GM12878 (cell line): ENCODE measurements at regions of chr4 and their contacts with region 1.

Region 1: GRCh38 chr4:176319704-176320339 is at the start of gene SPCS3:
- DNase-seq: peak; percentile 67
- ATAC-seq: peak; percentile 94
- H3K4me3 ChIP-seq: peak within 1 kb of the TSS; percentile 81
- H3K27ac ChIP-seq: peak within 1 kb of the TSS; percentile 83
- H3K4me1 ChIP-seq: peaks cover 9% of the 10 kb centered on the region; the same call in 1 of the 2 replicates
- H3K27me3 ChIP-seq: no peaks in the 10 kb centered on the region
- CTCF ChIP-seq: no peak
- EP300 ChIP-seq: no peak
- POLR2A ChIP-seq: peak; percentile 94
- RAD21 ChIP-seq: no peak
- polyA plus RNA-seq, gene SPCS3: 50.6 to 53.4 TPM

Region 2: DNA sequence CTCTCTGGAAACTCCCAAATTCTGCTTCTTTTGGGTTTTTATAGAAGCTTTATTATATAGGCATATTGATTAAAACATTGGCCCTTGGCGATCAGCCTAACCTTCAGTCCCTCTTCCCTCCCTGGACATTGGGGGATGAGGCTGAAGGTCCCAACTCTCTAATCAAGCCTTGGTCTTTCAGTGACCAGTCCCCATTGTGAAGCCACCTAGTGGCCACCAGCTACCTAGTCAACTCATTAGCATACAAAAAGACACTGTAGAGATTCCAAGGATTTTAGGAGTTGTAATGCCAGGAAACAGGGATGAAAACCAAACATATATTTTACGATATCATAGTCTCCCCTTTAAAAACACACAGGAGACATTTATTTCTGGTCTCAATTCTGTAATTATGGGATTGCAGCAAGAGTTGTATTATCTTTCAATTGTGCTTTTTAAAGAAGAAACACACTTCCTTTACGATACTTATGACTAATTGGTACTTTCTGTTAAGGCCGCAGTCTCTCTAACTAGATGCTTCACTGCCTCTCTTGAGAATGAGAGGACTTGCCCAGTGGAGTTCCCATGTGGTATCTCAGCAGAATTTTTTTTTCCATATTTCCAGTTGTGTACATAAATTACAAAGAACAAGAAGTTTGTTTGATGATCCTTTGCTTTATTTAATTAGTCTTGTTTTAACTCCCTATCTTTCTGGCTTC is 196.0 kb before region 1 on chr4:
- CTCF ChIA-PET with region 1: interaction called, 14 read pairs
- POLR2A ChIA-PET with region 1: no interaction called
- RAD21 ChIA-PET with region 1: no interaction called
- SMC1A ChIA-PET with region 1: no interaction called
- in situ Hi-C with region 1: no loop called
- intact Hi-C with region 1: no loop called
- DNase-seq: peak; percentile 51
- ATAC-seq: peak; percentile 99
- H3K4me3 ChIP-seq: 0 out of 2 replicates have a peak overlapping the region, but pooled peaks have one; percentile 1
- H3K27ac ChIP-seq: no peak overlapping the region
- H3K4me1 ChIP-seq: peaks cover 7% of the 10 kb centered on the region
- H3K27me3 ChIP-seq: no peaks in the 10 kb centered on the region
- CTCF ChIP-seq: peak; percentile 47 to 80 (median 67)
- EP300 ChIP-seq: peak; percentile 71 to 78; a peak in 3 of 4 replicates
- POLR2A ChIP-seq: no peak
- RAD21 ChIP-seq: peak; percentile 33

Region 3: DNA sequence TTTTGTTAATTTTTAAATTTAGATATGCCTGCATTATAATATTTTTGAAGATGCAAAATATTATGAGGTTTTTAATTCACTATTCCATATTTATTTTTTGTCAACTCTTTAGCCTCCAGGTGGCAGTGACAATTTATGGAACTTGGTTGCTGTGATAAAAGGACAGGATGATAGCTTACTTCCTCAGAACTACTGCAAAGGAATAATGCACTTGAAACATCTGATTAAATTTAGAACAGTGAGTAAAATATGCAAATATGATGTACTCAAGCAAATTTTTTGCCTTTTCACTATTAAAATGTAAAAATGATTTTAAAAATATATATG is 169.5 kb before region 1 on chr4:
- CTCF ChIA-PET with region 1: no interaction called
- POLR2A ChIA-PET with region 1: no interaction called
- RAD21 ChIA-PET with region 1: interaction called, 4 read pairs
- SMC1A ChIA-PET with region 1: no interaction called
- in situ Hi-C with region 1: no loop called
- intact Hi-C with region 1: loop called (anchors 5 kb)
- DNase-seq: no peak
- ATAC-seq: no peak
- H3K4me3 ChIP-seq: no peak overlapping the region
- H3K27ac ChIP-seq: no peak overlapping the region
- H3K4me1 ChIP-seq: no peaks in the 10 kb centered on the region
- H3K27me3 ChIP-seq: no peaks in the 10 kb centered on the region
- CTCF ChIP-seq: peak in 1 of 3 experiments; percentile 30; a peak in 1 of 6 replicates
- EP300 ChIP-seq: no peak
- POLR2A ChIP-seq: no peak
- RAD21 ChIP-seq: peak; percentile 56

Region 4: GRCh38 chr4:176195184-176195978 is 124.4 kb before region 1 on chr4 and contains the start of gene SPATA4:
- CTCF ChIA-PET with region 1: no interaction called
- POLR2A ChIA-PET with region 1: interaction called, 4 read pairs
- RAD21 ChIA-PET with region 1: no interaction called
- SMC1A ChIA-PET with region 1: interaction called, 4 read pairs
- in situ Hi-C with region 1: no loop called
- intact Hi-C with region 1: loop called (anchors 1 kb)
- DNase-seq: peak; percentile 84
- ATAC-seq: peak; percentile 99
- H3K4me3 ChIP-seq: peak within 1 kb of the TSS; percentile 66
- H3K27ac ChIP-seq: no peak within 1 kb of the TSS
- H3K4me1 ChIP-seq: peaks cover 12% of the 10 kb centered on the region
- H3K27me3 ChIP-seq: peaks cover 0 to 1% of the 10 kb centered on the region in 2 experiments; a peak in 3 of 4 replicates
- CTCF ChIP-seq: no peak
- EP300 ChIP-seq: peak; percentile 42 to 66; a peak in 1 of 4 replicates
- POLR2A ChIP-seq: no peak
- RAD21 ChIP-seq: 0 out of 2 replicates have a peak, but pooled peaks have one; percentile 4
- polyA plus RNA-seq, gene SPATA4: not detected

Region 5: DNA sequence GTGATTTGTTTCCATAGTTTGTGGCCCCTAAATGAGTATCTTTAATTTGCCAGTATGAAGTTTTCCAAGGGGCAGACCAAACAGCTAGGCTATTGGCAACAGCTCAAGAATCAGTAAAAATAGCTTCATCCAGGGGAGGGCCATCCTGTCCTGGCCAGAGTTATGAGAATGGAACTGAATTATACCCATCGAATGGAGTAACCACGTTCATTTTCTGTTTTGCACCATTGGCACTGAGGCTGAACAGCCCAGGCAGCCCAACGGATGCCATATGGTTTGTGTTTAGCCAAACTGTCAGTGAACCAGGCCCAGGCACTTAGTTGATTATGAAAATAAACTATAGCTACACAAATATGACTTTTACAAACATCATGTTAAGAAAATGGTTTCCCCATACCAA is 33.1 kb before region 1 on chr4:
- CTCF ChIA-PET with region 1: no interaction called
- POLR2A ChIA-PET with region 1: no interaction called
- RAD21 ChIA-PET with region 1: no interaction called
- SMC1A ChIA-PET with region 1: no interaction called
- in situ Hi-C with region 1: no loop called
- intact Hi-C with region 1: no loop called
- DNase-seq: no peak
- ATAC-seq: no peak
- H3K4me3 ChIP-seq: no peak overlapping the region
- H3K27ac ChIP-seq: no peak overlapping the region
- H3K4me1 ChIP-seq: no peaks in the 10 kb centered on the region
- H3K27me3 ChIP-seq: 0 out of 4 replicates have a peak, but pooled peaks cover 0 to 3% of the 10 kb centered on the region in 2 experiments
- CTCF ChIP-seq: no peak
- EP300 ChIP-seq: no peak
- POLR2A ChIP-seq: no peak
- RAD21 ChIP-seq: no peak

Region 6: GRCh38 chr4:176309046-176309445 is 10.8 kb before region 1 on chr4:
- CTCF ChIA-PET with region 1: interaction called, 3 read pairs
- POLR2A ChIA-PET with region 1: interaction called, 5 read pairs
- RAD21 ChIA-PET with region 1: no interaction called
- SMC1A ChIA-PET with region 1: interaction called, 23 read pairs
- in situ Hi-C with region 1: no loop called
- intact Hi-C with region 1: no loop called
- DNase-seq: no peak
- ATAC-seq: peak; percentile 98
- H3K4me3 ChIP-seq: no peak overlapping the region
- H3K27ac ChIP-seq: no peak overlapping the region
- H3K4me1 ChIP-seq: peaks cover 17% of the 10 kb centered on the region
- H3K27me3 ChIP-seq: no peaks in the 10 kb centered on the region
- CTCF ChIP-seq: no peak
- EP300 ChIP-seq: peak; percentile 13 to 32; a peak in 1 of 4 replicates
- POLR2A ChIP-seq: no peak
- RAD21 ChIP-seq: no peak

Region 7: GRCh38 chr4:176335406-176335805 is 15.6 kb after region 1 on chr4:
- CTCF ChIA-PET with region 1: interaction called, 27 read pairs
- POLR2A ChIA-PET with region 1: interaction called, 3 read pairs
- RAD21 ChIA-PET with region 1: no interaction called
- SMC1A ChIA-PET with region 1: interaction called, 36 read pairs
- in situ Hi-C with region 1: no loop called
- intact Hi-C with region 1: no loop called
- DNase-seq: no peak
- ATAC-seq: no peak
- H3K4me3 ChIP-seq: no peak overlapping the region
- H3K27ac ChIP-seq: no peak overlapping the region
- H3K4me1 ChIP-seq: no peaks in the 10 kb centered on the region
- H3K27me3 ChIP-seq: no peaks in the 10 kb centered on the region
- CTCF ChIP-seq: no peak
- EP300 ChIP-seq: no peak
- POLR2A ChIP-seq: no peak
- RAD21 ChIP-seq: no peak

Region 8: DNA sequence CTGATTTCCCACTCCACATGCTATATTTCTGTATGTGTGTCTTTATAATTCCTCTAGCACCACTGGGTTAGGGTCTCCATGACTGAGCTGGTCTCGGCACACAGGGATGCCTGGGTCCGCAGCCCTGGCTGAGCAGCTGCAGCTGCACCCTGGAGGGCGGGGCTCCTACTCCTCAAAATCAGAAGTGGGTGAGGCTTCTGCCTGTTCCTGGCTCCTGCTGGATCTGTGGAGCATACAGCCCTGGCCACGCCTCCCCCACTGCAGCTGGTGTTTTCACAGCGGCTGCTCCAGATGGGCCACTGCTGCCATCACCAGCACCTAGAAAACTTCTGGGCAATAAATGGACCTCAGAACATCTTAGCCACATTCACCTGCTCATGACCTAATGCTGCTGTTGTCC is 30.8 kb after region 1 on chr4:
- CTCF ChIA-PET with region 1: no interaction called
- POLR2A ChIA-PET with region 1: no interaction called
- RAD21 ChIA-PET with region 1: no interaction called
- SMC1A ChIA-PET with region 1: no interaction called
- in situ Hi-C with region 1: no loop called
- intact Hi-C with region 1: no loop called
- DNase-seq: no peak
- ATAC-seq: no peak
- H3K4me3 ChIP-seq: no peak overlapping the region
- H3K27ac ChIP-seq: no peak overlapping the region
- H3K4me1 ChIP-seq: no peaks in the 10 kb centered on the region
- H3K27me3 ChIP-seq: no peaks in the 10 kb centered on the region
- CTCF ChIP-seq: no peak
- EP300 ChIP-seq: no peak
- POLR2A ChIP-seq: no peak
- RAD21 ChIP-seq: no peak